AG04449 (cell line): ENCODE measurements at regions of chr2 and their contacts with region 1.

Region 1: DNA sequence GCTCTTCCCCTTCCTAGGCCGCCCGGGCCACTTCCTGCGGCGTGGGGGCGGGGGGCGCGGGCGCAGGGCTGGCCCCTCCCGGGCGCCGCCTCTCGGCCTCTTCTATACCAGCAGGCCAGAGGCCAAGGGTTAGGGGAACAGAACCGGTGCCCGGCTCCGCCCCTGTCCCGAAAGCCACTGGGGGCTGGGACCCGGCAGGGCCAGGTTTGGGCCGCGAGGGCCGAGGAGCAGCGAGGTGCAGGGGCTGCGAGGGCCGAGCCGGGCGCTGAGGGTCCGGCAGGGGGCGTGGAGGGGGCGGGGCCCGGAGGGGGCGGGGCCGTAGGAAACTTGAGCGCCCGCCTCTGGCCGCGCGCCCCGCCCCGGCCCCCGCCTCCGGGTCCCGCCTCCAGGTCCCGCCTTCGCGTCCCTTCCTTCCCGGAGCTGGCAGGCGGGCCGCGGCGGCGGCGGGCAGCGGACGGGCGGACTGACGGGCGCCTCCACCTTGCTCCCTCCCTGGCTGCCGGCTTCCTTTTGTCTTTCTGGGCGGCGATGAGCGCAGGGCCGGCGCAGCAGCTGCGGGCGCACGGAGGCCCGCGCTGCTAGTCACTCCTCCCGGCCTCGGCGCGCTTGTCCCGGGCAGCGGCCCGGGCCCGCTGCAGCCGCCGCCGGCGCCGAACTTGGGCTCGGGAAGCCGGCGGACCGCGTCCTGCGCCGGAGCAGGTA is at the start of gene HPCAL1:
- DNase-seq: no peak
- H3K4me3 ChIP-seq: peak within 1 kb of the TSS; percentile 69
- CTCF ChIP-seq: peak; percentile 54

Region 2: DNA sequence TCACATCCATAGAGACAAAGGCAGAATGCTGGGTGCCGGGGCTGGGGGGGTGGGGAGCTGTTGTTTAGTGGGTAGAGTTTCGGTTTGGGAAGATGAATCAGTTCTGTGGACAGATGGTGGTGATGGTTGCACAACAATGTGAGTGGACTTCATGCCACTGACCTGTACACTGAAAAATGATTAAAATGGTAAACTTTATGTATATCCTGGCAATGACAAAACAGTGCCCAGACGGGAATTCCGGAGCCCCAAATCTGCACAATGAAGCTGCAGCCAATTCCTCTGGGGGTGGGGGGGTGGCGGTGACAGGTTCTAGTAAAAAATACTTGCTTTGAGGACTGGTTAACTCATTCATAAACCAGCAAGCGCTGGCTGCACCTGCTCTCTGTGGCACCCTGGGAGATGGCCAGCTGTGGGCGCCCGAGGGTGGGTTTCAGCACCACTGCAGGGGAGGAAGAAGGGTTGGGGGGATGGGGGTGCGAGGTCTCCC is 81.7 kb before region 1 on chr2:
- CTCF ChIA-PET with region 1: no interaction called
- POLR2A ChIA-PET with region 1: no interaction called
- DNase-seq: peak; percentile 24
- H3K4me3 ChIP-seq: no peak overlapping the region
- CTCF ChIP-seq: no peak

Region 3: DNA sequence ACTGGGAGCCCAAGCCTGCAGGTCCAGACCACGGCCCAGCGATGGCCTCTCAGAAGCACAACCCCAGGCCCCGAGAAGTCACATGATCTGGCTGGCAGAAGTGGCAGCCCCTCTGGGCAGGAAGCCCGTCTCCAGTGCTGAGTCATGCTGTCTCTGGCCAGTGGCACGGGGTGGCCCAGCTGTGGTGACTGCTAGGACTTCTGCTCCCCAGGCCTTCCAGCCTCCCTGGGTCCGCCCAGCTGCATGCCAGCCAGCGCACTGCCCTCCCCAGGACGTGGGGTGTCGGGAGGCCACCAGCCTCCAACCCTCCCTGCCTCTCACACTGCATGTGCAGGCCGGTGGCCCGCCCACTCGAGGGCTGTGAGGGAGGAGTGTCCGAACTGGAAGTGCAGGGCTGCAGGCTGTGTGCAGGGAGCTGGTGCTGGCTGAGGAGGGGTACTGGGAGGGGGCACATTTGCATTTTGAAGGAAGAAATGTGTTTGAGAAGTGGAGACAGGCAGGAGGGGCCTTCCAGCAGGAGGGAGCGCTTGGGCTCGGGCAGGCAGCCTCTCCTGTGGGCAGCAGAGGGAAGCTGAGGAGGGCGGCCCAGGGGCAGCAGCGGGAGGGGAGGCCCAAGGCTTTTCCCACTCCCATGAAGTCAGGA is 17.0 kb before region 1 on chr2:
- CTCF ChIA-PET with region 1: interaction called, 14 read pairs
- POLR2A ChIA-PET with region 1: interaction called, 4 read pairs
- DNase-seq: no peak
- H3K4me3 ChIP-seq: no peak overlapping the region
- CTCF ChIP-seq: no peak

Region 4: DNA sequence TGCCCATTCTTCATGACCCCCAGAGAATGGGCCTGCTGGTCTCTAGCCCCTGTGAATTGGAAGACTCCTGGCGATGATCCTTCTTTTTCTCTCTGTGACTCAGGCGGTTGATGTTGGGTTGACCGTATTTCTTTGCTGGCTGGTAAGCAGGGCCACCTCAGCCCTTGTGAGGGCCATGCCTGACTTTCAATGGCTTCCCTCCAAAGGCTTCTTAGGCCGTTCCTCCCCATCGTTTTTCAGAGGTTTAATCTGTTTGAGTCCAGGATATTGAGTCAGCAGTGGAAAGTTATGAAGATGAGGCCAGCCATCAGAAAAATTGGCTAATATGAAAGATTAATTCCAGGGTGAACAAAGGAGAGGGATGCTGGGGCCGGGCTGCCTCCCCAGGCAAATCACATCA is 13.7 kb after region 1 on chr2:
- CTCF ChIA-PET with region 1: interaction called, 14 read pairs
- POLR2A ChIA-PET with region 1: no interaction called
- DNase-seq: no peak
- H3K4me3 ChIP-seq: no peak overlapping the region
- CTCF ChIP-seq: no peak